H1 (cell line): ENCODE measurements at regions of chr1 and their contacts with region 1.

Region 1: DNA sequence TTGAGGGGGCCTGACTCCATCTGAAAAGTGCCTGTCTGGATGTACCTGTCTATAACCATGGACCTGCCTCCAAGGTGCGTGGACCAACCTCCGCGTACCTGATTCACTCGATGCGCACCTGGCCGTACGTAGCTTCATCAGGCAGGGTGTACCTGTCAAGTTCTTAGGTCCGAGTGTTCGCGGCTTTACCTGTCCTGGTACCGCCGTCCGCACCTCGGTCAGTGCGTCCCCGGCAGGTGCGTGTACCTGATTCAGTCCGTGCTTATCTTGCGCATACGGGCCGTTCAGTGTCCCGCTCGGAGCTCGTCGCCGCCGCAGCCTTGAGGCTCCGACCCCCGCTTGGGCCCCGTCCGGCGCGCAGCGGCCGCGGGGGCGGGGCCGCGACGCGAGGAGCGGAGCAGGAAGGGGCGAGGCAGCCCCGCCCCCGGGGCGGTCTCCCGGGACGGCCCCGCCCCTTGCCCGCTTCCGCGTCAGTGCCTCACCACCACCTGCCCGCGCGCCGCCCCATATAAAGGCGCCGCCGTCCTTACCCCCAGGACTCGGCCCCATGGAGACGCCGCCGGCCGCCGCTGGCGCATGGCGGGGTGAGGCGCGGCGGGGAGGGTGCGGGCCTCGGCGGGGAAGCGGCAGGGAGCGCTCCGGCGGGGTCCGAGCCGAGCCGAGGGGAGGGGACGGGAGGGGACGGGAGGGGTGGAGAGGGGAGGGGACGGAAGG is at the start of gene ZC3H12A:
- DNase-seq: peak; percentile 70 to 88
- H3K4me3 ChIP-seq: peak within 1 kb of the TSS; percentile 46 to 76 (median 62)
- H3K27ac ChIP-seq: no peak within 1 kb of the TSS
- H3K4me1 ChIP-seq: peaks cover 6 to 60% (median 36%) of the 10 kb centered on the region in 4 experiments
- H3K27me3 ChIP-seq: peaks cover 1 to 13% (median 9%) of the 10 kb centered on the region in 4 experiments; a peak in 6 of 7 replicates
- CTCF ChIP-seq: no peak
- EP300 ChIP-seq: no peak
- POLR2A ChIP-seq: peak in 1 of 2 experiments; percentile 86; a peak in 2 of 3 replicates
- RAD21 ChIP-seq: no peak
- total RNA-seq, gene ZC3H12A: 7.4 TPM in 2 replicates

Region 2: DNA sequence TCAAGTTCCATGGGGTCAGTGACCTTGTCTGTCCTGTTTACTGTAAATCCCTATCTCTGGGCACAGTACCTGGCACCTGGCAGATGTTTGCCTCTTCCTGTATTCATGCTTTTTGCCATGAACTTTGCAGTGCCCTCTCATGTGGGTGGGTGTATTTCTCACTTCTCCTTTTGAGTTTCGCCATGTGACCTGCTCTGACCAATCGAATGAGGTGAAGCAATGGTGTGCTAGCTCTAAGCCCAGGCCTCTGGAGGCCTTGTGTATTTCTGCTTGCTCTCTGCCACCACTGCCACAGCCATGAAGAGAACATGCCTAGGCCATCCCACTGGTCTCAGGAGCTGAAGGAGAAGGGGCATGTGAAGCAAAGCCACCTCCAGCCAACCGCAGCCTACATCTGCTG is 185.3 kb before region 1 on chr1:
- CTCF ChIA-PET with region 1: no interaction called
- POLR2A ChIA-PET with region 1: no interaction called
- DNase-seq: no peak
- H3K4me3 ChIP-seq: no peak overlapping the region
- H3K27ac ChIP-seq: no peak overlapping the region
- H3K4me1 ChIP-seq: peaks cover 0 to 2% (median 0%) of the 10 kb centered on the region in 4 experiments; a peak in 2 of 7 replicates
- H3K27me3 ChIP-seq: no peaks in the 10 kb centered on the region
- CTCF ChIP-seq: no peak
- EP300 ChIP-seq: no peak
- POLR2A ChIP-seq: no peak
- RAD21 ChIP-seq: no peak

Region 3: DNA sequence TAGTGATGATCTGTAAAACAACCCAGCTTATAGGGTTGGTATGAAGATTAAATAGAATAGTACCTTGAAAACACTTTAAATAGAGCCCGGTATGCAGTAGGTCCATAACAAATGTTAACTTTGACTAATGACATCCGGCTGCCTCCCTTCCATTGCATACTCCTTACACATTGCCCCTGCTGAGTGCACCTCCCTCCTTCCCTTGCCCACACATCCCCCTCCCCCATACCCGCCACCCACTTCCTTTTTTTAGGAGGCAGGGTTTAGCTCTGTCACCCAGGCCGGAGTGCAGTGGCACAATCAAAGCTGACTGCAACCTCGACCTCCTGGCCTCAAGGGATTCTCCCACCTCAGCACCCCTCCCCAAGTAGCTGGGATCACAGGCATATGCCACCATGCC is 24.3 kb before region 1 on chr1:
- CTCF ChIA-PET with region 1: interaction called, 213 read pairs
- POLR2A ChIA-PET with region 1: interaction called, 15 read pairs
- DNase-seq: no peak
- H3K4me3 ChIP-seq: no peak overlapping the region
- H3K27ac ChIP-seq: no peak overlapping the region
- H3K4me1 ChIP-seq: peaks cover 0 to 23% (median 9%) of the 10 kb centered on the region in 4 experiments; a peak in 6 of 7 replicates
- H3K27me3 ChIP-seq: no peaks in the 10 kb centered on the region; a peak in 1 of 7 replicates
- CTCF ChIP-seq: no peak
- EP300 ChIP-seq: no peak
- POLR2A ChIP-seq: no peak
- RAD21 ChIP-seq: no peak

Region 4: DNA sequence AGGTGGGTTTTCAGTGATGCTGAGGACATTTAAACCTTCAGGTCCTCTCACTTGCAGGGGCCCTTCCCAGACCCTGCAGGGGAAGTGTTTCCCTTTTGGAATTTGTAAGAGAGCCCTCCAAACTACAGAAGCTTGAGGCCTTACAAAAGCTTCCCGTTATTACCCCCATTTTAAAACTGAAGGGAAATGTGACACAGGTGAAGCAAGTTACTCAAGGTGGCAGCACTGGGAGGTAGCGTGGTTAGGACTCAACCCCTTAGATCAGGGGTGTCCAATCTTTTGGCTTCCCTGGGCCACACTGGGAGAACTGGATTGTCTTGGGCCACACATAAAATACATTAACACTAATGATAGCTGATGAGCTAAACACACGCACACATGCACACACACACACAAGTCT is 15.7 kb before region 1 on chr1:
- CTCF ChIA-PET with region 1: interaction called, 213 read pairs
- POLR2A ChIA-PET with region 1: interaction called, 15 read pairs
- DNase-seq: no peak
- H3K4me3 ChIP-seq: no peak overlapping the region
- H3K27ac ChIP-seq: no peak overlapping the region
- H3K4me1 ChIP-seq: 0 out of 7 replicates have a peak, but pooled peaks cover 0 to 2% (median 0%) of the 10 kb centered on the region in 4 experiments
- H3K27me3 ChIP-seq: no peaks in the 10 kb centered on the region
- CTCF ChIP-seq: peak in 2 of 3 experiments; percentile 16 to 38; a peak in 2 of 4 replicates
- EP300 ChIP-seq: no peak
- POLR2A ChIP-seq: no peak
- RAD21 ChIP-seq: peak; percentile 28 to 31

Region 5: GRCh38 chr1:37514350-37515184 is 40.4 kb after region 1 on chr1 and contains the start of gene MEAF6:
- CTCF ChIA-PET with region 1: interaction called, 5 read pairs
- POLR2A ChIA-PET with region 1: interaction called, 15 read pairs
- DNase-seq: peak; percentile 46 to 92
- H3K4me3 ChIP-seq: peak within 1 kb of the TSS; percentile 69 to 97 (median 78)
- H3K27ac ChIP-seq: peak within 1 kb of the TSS; percentile 79; the same call in 1 of the 2 replicates
- H3K4me1 ChIP-seq: peaks cover 2 to 13% (median 6%) of the 10 kb centered on the region in 4 experiments; a peak in 4 of 7 replicates
- H3K27me3 ChIP-seq: no peaks in the 10 kb centered on the region
- CTCF ChIP-seq: peak; percentile 61 to 70 (median 63)
- EP300 ChIP-seq: peak in 1 of 2 experiments; percentile 32; a peak in 1 of 3 replicates
- POLR2A ChIP-seq: peak; percentile 46 to 60; a peak in 2 of 3 replicates
- RAD21 ChIP-seq: no peak
- total RNA-seq, gene MEAF6: 36.9 and 38.8 TPM in 2 replicates